Adrenal gland (tissue), 19 donors: ENCODE measurements at regions of chr5 and their contacts with region 1.

Region 1: GRCh38 chr5:68287976-68288706 is 72.6 kb downstream of the PIK3R1 start:
- DNase-seq: peak; percentile 64 to 87 (median 71)
- H3K4me3 ChIP-seq: peak overlapping the region in 3 of 4 donors; percentile 19 to 47 (median 31)
- H3K27ac ChIP-seq: peak overlapping the region in 4 of 5 donors; percentile 71 to 88 (median 79)
- H3K4me1 ChIP-seq: peaks cover 14 to 61% of the 10 kb centered on the region in 2 donors
- H3K27me3 ChIP-seq: no peaks in the 10 kb centered on the region
- CTCF ChIP-seq: no peak
- POLR2A ChIP-seq: peak in 1 of 2 donors; percentile 66

Region 2: DNA sequence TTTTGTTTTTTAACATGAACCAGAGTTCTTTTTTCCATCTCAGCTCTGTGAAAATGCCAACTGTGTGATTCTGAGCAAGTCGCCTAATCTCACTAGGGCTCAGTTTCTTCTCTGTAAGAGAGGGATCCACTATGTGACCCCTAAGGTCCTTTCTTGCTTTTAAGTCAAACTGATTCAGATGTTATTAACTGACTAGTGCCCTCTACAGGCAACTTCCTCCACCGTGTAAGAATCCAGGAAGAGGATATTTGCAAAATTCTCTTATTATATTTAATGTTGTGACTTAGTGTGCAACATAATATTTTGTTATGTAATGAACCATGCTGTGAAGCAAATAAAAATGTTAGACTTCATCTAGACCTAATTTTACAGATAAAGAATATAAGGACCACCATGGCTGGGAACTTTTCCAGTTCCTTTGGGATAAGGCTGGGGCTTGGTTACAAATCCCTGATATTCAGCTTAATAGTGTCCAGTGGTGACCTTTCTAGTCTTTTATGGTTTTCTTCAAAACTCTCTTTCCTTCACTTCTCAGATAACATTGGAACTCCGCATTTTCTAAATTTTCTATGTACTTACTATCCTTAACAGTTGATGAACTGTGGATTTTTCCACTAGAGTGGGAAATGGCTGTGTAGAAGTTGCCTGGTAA is 172.1 kb after region 1 on chr5:
- intact Hi-C with region 1: loop called (anchors 2 to 5 kb)
- DNase-seq: peak; percentile 20 to 69 (median 43)
- H3K4me3 ChIP-seq: no peak overlapping the region
- H3K27ac ChIP-seq: no peak overlapping the region
- H3K4me1 ChIP-seq: peaks cover 11 to 13% of the 10 kb centered on the region in 2 donors
- H3K27me3 ChIP-seq: no peaks in the 10 kb centered on the region
- CTCF ChIP-seq: peak; percentile 50 to 75 (median 68)
- POLR2A ChIP-seq: no peak

Region 3: DNA sequence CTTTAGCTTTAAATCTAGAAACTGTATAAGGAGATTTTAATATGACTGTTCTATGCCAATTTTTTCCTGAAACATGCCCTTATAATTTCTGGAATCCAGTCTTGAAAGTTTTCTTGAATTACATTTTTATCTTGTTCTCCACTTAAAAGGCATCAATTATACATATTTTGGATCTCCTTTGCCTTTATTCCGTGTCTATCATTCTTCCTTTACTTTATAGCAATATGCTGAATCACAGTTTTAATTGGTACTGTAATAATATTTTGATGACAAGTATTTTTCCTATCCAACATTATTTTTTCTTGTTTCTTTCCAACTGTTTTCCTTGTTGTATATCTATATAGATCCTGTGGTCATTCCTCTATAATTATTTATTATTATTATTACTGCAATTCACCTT is 288.7 kb after region 1 on chr5:
- intact Hi-C with region 1: no loop called
- DNase-seq: no peak
- H3K4me3 ChIP-seq: no peak overlapping the region
- H3K27ac ChIP-seq: no peak overlapping the region
- H3K4me1 ChIP-seq: no peaks in the 10 kb centered on the region
- H3K27me3 ChIP-seq: no peaks in the 10 kb centered on the region
- CTCF ChIP-seq: no peak
- POLR2A ChIP-seq: no peak